Activated CD8-positive, alpha-beta T cell treated with anti-CD3 and anti-CD28 coated beads for 36 hours (primary cell): ENCODE measurements at regions of chr17 and their contacts with region 1.

Region 1: GRCh38 chr17:78019367-78019975 is 61.0 kb downstream of the TNRC6C start:
- DNase-seq: no peak
- ATAC-seq: no peak
- H3K4me3 Mint-ChIP-seq: no peak overlapping the region
- H3K27ac Mint-ChIP-seq: peak overlapping the region; percentile 90
- H3K4me1 Mint-ChIP-seq: peaks cover 31% of the 10 kb centered on the region
- H3K27me3 Mint-ChIP-seq: no peaks in the 10 kb centered on the region
- CTCF ChIP-seq: peak; percentile 72

Region 2: GRCh38 chr17:77542551-77543490 is 476.6 kb before region 1 on chr17:
- CTCF ChIA-PET with region 1: interaction called, 21 read pairs
- POLR2A ChIA-PET with region 1: no interaction called
- intact Hi-C with region 1: loop called (anchors 10 kb)
- DNase-seq: peak; percentile 80
- ATAC-seq: peak; percentile 94
- H3K4me3 Mint-ChIP-seq: no peak overlapping the region
- H3K27ac Mint-ChIP-seq: no peak overlapping the region
- H3K4me1 Mint-ChIP-seq: no peaks in the 10 kb centered on the region
- H3K27me3 Mint-ChIP-seq: no peaks in the 10 kb centered on the region
- CTCF ChIP-seq: peak; percentile 93

Region 3: GRCh38 chr17:78005452-78006171 is 13.9 kb before region 1 on chr17:
- CTCF ChIA-PET with region 1: interaction called, 33 read pairs
- POLR2A ChIA-PET with region 1: interaction called, 3 read pairs
- intact Hi-C with region 1: no loop called
- DNase-seq: no peak
- ATAC-seq: no peak
- H3K4me3 Mint-ChIP-seq: no peak overlapping the region
- H3K27ac Mint-ChIP-seq: peak overlapping the region; percentile 50
- H3K4me1 Mint-ChIP-seq: peaks cover 47% of the 10 kb centered on the region
- H3K27me3 Mint-ChIP-seq: no peaks in the 10 kb centered on the region
- CTCF ChIP-seq: no peak

Region 4: GRCh38 chr17:78040440-78041385 is 21.2 kb after region 1 on chr17:
- CTCF ChIA-PET with region 1: interaction called, 26 read pairs
- POLR2A ChIA-PET with region 1: interaction called, 6 read pairs
- intact Hi-C with region 1: no loop called
- DNase-seq: peak; percentile 25
- ATAC-seq: peak; percentile 65
- H3K4me3 Mint-ChIP-seq: peak overlapping the region; percentile 64
- H3K27ac Mint-ChIP-seq: peak overlapping the region; percentile 5
- H3K4me1 Mint-ChIP-seq: peaks cover 25% of the 10 kb centered on the region
- H3K27me3 Mint-ChIP-seq: no peaks in the 10 kb centered on the region
- CTCF ChIP-seq: no peak

Region 5: DNA sequence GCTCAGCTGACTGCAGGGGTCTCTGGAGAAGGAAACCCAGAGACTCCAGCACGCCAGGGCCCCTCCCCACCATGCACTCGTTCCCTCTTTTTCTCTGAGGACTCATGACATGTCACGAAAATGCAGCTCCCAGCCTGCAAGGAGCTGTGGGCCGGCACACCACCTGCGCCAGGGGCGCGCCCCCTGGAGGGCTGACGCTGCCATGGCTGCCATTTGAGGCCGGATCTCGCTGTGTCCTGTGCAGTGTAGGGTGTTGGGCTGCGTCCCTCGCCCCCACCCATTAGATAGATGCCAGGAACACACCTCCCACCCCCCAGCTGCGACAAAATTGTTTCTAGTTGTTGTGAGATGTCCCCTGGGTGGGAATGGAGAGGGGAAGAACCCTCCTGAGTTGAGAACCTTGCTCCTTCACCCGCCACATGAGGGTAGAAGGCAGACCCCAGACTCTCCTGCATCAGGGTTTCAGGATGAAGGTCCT is 157.1 kb after region 1 on chr17:
- CTCF ChIA-PET with region 1: interaction called, 12 read pairs
- POLR2A ChIA-PET with region 1: interaction called, 3 read pairs
- intact Hi-C with region 1: no loop called
- DNase-seq: peak; percentile 81
- ATAC-seq: peak; percentile 87
- H3K4me3 Mint-ChIP-seq: no peak overlapping the region
- H3K27ac Mint-ChIP-seq: no peak overlapping the region
- H3K4me1 Mint-ChIP-seq: peaks cover 40% of the 10 kb centered on the region
- H3K27me3 Mint-ChIP-seq: no peaks in the 10 kb centered on the region
- CTCF ChIP-seq: peak; percentile 93

Region 6: DNA sequence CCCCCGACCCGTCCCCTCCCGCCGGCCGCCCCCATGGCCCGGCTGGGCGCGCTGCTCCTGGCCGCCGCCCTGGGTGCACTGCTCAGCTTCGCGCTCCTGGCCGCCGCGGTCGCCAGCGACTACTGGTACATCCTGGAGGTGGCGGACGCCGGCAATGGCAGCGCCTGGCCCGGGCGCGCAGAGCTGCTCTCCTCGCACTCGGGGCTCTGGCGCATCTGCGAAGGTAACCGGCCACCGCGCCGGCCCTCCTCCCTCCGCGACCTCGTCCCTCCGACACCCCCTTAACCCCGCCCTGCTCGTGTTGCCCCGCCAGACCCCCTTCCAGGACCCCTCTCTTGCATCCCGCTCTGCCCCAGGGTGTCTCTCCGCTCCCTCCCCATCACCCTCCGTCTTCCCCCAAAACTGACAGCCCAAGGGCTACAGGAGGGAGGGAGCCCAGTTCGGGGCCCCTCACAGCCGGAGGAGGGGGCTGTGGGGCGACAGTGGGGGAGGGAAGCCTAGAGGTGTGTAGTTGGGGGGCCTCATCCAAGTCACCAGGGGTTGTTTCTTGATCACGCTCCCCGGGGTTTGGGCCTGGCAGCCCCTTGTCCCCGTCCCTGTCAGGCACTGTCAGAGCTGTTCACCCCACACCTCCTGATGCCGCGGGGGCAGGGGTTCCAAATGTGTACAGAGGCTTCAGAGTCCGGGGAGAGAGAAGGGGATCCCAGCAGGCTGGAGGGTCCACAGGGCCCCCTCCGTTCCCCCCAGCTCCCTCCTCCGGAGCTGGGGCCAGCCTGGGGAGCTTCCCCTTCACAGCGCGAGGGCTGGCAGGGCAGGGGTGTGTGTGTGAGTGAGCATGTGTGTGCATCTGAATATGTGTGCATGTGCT is 212.8 kb after region 1 on chr17:
- CTCF ChIA-PET with region 1: no interaction called
- POLR2A ChIA-PET with region 1: no interaction called
- intact Hi-C with region 1: no loop called
- DNase-seq: peak; percentile 56
- ATAC-seq: peak; percentile 77
- H3K4me3 Mint-ChIP-seq: no peak overlapping the region
- H3K27ac Mint-ChIP-seq: no peak overlapping the region
- H3K4me1 Mint-ChIP-seq: peaks cover 15% of the 10 kb centered on the region
- H3K27me3 Mint-ChIP-seq: peaks cover 28% of the 10 kb centered on the region
- CTCF ChIP-seq: no peak